ENCODE measurements at regions of chr5 and their contacts with region 1.

Region 1: GRCh38 chr5:135398853-135399523 is at the start of gene MACROH2A1:
- DNase-seq: peak; percentile 87 to 89 (median 87)
- H3K4me3 ChIP-seq: peak within 1 kb of the TSS; percentile 79 to 96 (median 96)
- H3K4me3 Mint-ChIP-seq: peak within 1 kb of the TSS; percentile 92 to 96
- H3K27ac ChIP-seq: peak within 1 kb of the TSS; percentile 96
- H3K27ac Mint-ChIP-seq: peak within 1 kb of the TSS; percentile 95 to 100 (median 99)
- H3K4me1 ChIP-seq: peaks cover 58 to 60% of the 10 kb centered on the region in 2 donors
- H3K4me1 Mint-ChIP-seq: peaks cover 58% of the 10 kb centered on the region
- H3K27me3 ChIP-seq: no peaks in the 10 kb centered on the region
- H3K27me3 Mint-ChIP-seq: no peaks in the 10 kb centered on the region
- CTCF ChIP-seq: no peak
- polyA plus RNA-seq, gene MACROH2A1: 352 to 443 (median 440) TPM

Region 2: GRCh38 chr5:135383803-135384495 is 15.0 kb before region 1 on chr5:
- intact Hi-C with region 1: loop called in 1 of 2 experiments (anchors 2 kb)
- DNase-seq: no peak
- H3K4me3 ChIP-seq: no peak overlapping the region
- H3K4me3 Mint-ChIP-seq: no peak overlapping the region
- H3K27ac ChIP-seq: peak overlapping the region; percentile 44 to 96
- H3K27ac Mint-ChIP-seq: peak overlapping the region; percentile 54 to 99 (median 95)
- H3K4me1 ChIP-seq: peaks cover 82 to 86% of the 10 kb centered on the region in 2 donors
- H3K4me1 Mint-ChIP-seq: peaks cover 90% of the 10 kb centered on the region
- H3K27me3 ChIP-seq: no peaks in the 10 kb centered on the region
- H3K27me3 Mint-ChIP-seq: no peaks in the 10 kb centered on the region
- CTCF ChIP-seq: no peak

Region 3: DNA sequence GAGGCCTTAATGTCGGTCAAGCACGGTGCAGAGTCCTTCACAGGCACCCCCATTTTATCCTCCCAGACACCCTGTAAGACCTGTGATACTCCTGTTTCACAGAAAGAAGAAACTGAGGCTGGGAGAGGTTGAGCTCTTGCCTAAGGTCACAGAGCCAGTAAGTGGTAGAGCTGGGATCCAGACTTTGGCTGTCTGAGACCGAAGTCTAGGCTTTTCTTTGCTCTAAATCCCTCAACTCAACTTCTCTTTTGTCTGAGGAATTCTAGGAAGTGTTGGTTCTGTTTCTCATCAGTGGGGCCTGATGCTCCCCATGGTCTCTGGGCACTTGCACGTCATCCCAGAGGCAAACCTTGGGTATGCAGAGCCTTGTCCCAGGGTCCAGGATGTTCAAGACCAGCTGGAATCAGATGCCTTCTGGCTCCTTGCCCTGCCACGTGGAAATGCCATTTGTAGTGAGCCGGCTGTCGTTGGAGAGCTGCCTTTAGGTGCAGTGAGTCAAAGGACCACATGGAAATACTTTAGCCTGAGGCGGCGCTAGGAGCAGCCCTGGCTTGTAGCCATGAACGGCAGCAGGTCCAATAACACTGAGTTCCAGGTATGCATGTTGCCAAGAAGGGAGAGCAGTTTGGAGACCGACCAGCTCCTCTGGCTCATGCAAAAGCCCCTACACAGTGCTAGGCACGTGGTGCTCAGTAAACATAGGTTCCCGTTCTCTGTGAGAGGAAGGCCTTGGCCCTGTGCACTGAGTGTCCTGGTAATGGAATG is 39.0 kb after region 1 on chr5:
- intact Hi-C with region 1: loop called (anchors 5 kb)
- DNase-seq: peak in 2 of 3 donors; percentile 47 to 49
- H3K4me3 ChIP-seq: peak overlapping the region in 1 of 3 experiments; percentile 72
- H3K4me3 Mint-ChIP-seq: peak overlapping the region; percentile 70 to 86
- H3K27ac ChIP-seq: peak overlapping the region; percentile 84 to 85
- H3K27ac Mint-ChIP-seq: peak overlapping the region; percentile 90 to 96 (median 93)
- H3K4me1 ChIP-seq: peaks cover 94 to 98% of the 10 kb centered on the region in 2 donors
- H3K4me1 Mint-ChIP-seq: peaks cover 92% of the 10 kb centered on the region
- H3K27me3 ChIP-seq: no peaks in the 10 kb centered on the region
- H3K27me3 Mint-ChIP-seq: no peaks in the 10 kb centered on the region
- CTCF ChIP-seq: no peak

Region 4: GRCh38 chr5:135457424-135458071 is 58.6 kb after region 1 on chr5:
- intact Hi-C with region 1: loop called (anchors 5 kb)
- DNase-seq: peak; percentile 62 to 80 (median 76)
- H3K4me3 ChIP-seq: no peak overlapping the region
- H3K4me3 Mint-ChIP-seq: no peak overlapping the region
- H3K27ac ChIP-seq: no peak overlapping the region
- H3K27ac Mint-ChIP-seq: peak overlapping the region in 6 of 7 donors; percentile 18 to 98 (median 68)
- H3K4me1 ChIP-seq: peaks cover 43 to 45% of the 10 kb centered on the region in 2 donors
- H3K4me1 Mint-ChIP-seq: peaks cover 46% of the 10 kb centered on the region
- H3K27me3 ChIP-seq: no peaks in the 10 kb centered on the region
- H3K27me3 Mint-ChIP-seq: peaks cover 0 to 12% (median 0%) of the 10 kb centered on the region in 3 donors
- CTCF ChIP-seq: peak; percentile 93